CD14-positive monocyte (primary cell): ENCODE measurements at regions of chr12 and their contacts with region 1.

Region 1: DNA sequence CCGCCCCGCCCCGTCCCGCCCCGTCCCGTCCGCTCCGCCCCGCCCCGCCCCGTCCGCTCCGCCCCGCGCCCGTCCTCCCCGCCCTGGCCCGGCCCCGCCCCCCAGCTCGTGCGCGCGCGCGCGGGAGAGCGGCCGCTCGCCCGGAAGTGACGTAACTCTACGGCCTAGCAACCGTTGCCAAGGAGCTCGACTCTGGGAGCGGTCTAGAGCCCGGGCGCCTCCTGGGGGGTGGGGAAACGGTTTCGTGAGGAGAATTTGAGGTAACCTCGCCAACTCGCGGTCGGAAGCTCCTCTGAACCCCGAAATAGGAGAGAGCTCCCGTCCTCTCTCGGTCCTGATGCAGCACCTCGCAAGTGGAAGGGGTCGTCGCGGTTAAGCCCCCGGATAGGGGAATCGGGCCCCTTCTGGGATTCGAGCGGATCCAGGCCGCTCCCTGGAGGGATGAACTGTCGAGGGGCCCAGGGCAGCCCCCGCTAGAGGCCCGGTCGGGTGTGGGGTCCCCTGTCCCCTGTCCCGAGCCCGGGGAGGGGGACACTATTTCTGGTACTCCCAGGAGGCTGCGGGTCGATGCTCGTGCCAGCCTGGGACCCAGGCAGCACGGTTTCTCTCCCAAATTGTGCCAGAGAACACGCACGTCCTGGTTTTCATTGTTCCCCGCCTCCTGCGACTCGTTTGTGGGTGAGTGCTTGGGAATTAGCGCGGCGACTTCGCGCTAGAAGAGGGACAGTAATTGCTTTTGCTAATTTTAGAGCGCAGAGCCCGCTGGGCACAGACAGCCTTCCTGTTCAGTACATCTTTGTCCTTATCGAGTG is at the start of gene IFT81:
- DNase-seq: peak; percentile 89 to 94 (median 90)
- H3K4me3 ChIP-seq: peak within 1 kb of the TSS; percentile 68 to 88 (median 75)
- H3K4me3 Mint-ChIP-seq: peak within 1 kb of the TSS; percentile 94 to 96
- H3K27ac ChIP-seq: peak within 1 kb of the TSS; percentile 4 to 80
- H3K27ac Mint-ChIP-seq: peak within 1 kb of the TSS; percentile 86 to 98 (median 94)
- H3K4me1 ChIP-seq: peaks cover 18 to 33% of the 10 kb centered on the region in 2 donors
- H3K4me1 Mint-ChIP-seq: peaks cover 23% of the 10 kb centered on the region
- H3K27me3 ChIP-seq: no peaks in the 10 kb centered on the region
- H3K27me3 Mint-ChIP-seq: peaks cover 0 to 7% (median 0%) of the 10 kb centered on the region in 3 donors
- CTCF ChIP-seq: no peak
- polyA plus RNA-seq, gene IFT81: 0.39 to 0.97 (median 0.47) TPM

Region 2: GRCh38 chr12:109477185-109477962 is 647.0 kb before region 1 on chr12 and contains the starts of genes KCTD10 and UBE3B:
- intact Hi-C with region 1: loop called in 1 of 2 experiments (anchors 5 kb)
- DNase-seq: peak; percentile 88 to 90 (median 88)
- H3K4me3 ChIP-seq: peak within 1 kb of the TSS; percentile 74 to 95 (median 81)
- H3K4me3 Mint-ChIP-seq: peak within 1 kb of the TSS; percentile 93 to 96
- H3K27ac ChIP-seq: peak within 1 kb of the TSS; percentile 85 to 93
- H3K27ac Mint-ChIP-seq: peak within 1 kb of the TSS; percentile 92 to 100 (median 100)
- H3K4me1 ChIP-seq: peaks cover 20 to 28% of the 10 kb centered on the region in 2 donors
- H3K4me1 Mint-ChIP-seq: peaks cover 24% of the 10 kb centered on the region
- H3K27me3 ChIP-seq: no peaks in the 10 kb centered on the region
- H3K27me3 Mint-ChIP-seq: no peaks in the 10 kb centered on the region
- CTCF ChIP-seq: no peak
- polyA plus RNA-seq, gene KCTD10: 18.1 to 21.0 (median 20.0) TPM
- polyA plus RNA-seq, gene UBE3B: 14.4 to 25.9 (median 18.2) TPM

Region 3: GRCh38 chr12:110048242-110049027 is 76.0 kb before region 1 on chr12 and contains the start of gene C12orf76:
- intact Hi-C with region 1: loop called (anchors 10 kb)
- DNase-seq: peak; percentile 95 to 98 (median 95)
- H3K4me3 ChIP-seq: peak within 1 kb of the TSS; percentile 50 to 84 (median 57)
- H3K4me3 Mint-ChIP-seq: peak within 1 kb of the TSS; percentile 80 to 98
- H3K27ac ChIP-seq: peak within 1 kb of the TSS; percentile 82 to 88
- H3K27ac Mint-ChIP-seq: peak within 1 kb of the TSS; percentile 96 to 100 (median 99)
- H3K4me1 ChIP-seq: peaks cover 24 to 29% of the 10 kb centered on the region in 2 donors
- H3K4me1 Mint-ChIP-seq: peaks cover 30% of the 10 kb centered on the region
- H3K27me3 ChIP-seq: no peaks in the 10 kb centered on the region
- H3K27me3 Mint-ChIP-seq: no peaks in the 10 kb centered on the region
- CTCF ChIP-seq: no peak
- polyA plus RNA-seq, gene C12orf76: 9.3 to 19.4 (median 10.6) TPM

Region 4: GRCh38 chr12:110056147-110056484 is 68.3 kb before region 1 on chr12:
- intact Hi-C with region 1: loop called in 1 of 2 experiments (anchors 10 kb)
- DNase-seq: no peak
- H3K4me3 ChIP-seq: no peak overlapping the region
- H3K4me3 Mint-ChIP-seq: no peak overlapping the region
- H3K27ac ChIP-seq: peak overlapping the region in 1 of 2 donors; percentile 11
- H3K27ac Mint-ChIP-seq: peak overlapping the region in 2 of 7 donors; percentile 70 to 86
- H3K4me1 ChIP-seq: peaks cover 17 to 26% of the 10 kb centered on the region in 2 donors
- H3K4me1 Mint-ChIP-seq: peaks cover 33% of the 10 kb centered on the region
- H3K27me3 ChIP-seq: no peaks in the 10 kb centered on the region
- H3K27me3 Mint-ChIP-seq: peaks cover 0 to 2% (median 2%) of the 10 kb centered on the region in 3 donors
- CTCF ChIP-seq: no peak

Region 5: DNA sequence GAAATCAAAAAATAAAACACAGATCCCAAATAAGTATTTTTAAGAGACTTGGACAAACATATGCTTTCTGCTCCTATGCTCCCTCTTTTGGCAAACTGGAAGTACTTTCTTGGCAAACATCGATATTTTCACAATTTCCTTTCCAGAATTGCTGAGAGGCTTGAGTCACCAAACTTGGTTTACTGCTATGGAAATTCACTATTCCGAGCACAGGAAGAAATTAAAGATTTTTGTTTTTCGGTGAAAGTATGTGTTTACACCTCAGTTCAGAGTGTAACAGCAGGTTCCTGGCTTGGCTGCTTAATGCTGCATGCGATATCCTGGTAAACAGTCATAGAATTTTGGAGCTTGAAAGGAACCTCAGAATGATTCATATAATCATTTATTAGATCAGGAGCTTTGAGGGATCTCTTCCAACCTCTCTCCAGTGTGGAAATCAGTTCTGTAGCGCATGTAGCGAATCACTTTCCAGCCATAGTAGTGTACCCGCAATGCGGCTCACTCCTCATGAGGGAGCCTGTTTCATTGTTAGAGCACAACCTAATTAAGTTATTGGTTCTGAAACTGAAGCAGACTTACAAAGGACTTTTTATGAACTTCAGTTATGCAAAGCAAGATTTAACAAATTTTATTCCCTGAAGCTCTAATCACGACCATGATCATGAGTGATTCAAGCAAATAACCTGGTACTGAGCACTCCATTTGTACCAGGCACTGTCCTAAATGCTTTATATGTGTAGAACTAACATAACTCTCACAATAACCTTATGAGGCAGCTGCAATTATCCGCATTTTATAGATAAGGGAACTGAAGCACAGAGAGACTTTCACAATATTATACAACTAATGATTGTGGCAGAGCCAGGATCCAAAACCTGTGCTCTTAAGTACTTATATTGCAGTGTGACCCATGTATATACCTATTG is 100.3 kb after region 1 on chr12:
- intact Hi-C with region 1: loop called in 1 of 2 experiments (anchors 10 kb)
- DNase-seq: peak in 2 of 3 donors; percentile 37 to 46
- H3K4me3 ChIP-seq: peak overlapping the region in 2 of 3 experiments; percentile 9 to 37
- H3K4me3 Mint-ChIP-seq: peak overlapping the region in 1 of 2 donors; percentile 19
- H3K27ac ChIP-seq: peak overlapping the region in 1 of 2 donors; percentile 59
- H3K27ac Mint-ChIP-seq: peak overlapping the region in 6 of 7 donors; percentile 23 to 86 (median 52)
- H3K4me1 ChIP-seq: peaks cover 27 to 30% of the 10 kb centered on the region in 2 donors
- H3K4me1 Mint-ChIP-seq: peaks cover 27% of the 10 kb centered on the region
- H3K27me3 ChIP-seq: no peaks in the 10 kb centered on the region
- H3K27me3 Mint-ChIP-seq: peaks cover 0 to 4% (median 3%) of the 10 kb centered on the region in 3 donors
- CTCF ChIP-seq: peak; percentile 57

Region 6: DNA sequence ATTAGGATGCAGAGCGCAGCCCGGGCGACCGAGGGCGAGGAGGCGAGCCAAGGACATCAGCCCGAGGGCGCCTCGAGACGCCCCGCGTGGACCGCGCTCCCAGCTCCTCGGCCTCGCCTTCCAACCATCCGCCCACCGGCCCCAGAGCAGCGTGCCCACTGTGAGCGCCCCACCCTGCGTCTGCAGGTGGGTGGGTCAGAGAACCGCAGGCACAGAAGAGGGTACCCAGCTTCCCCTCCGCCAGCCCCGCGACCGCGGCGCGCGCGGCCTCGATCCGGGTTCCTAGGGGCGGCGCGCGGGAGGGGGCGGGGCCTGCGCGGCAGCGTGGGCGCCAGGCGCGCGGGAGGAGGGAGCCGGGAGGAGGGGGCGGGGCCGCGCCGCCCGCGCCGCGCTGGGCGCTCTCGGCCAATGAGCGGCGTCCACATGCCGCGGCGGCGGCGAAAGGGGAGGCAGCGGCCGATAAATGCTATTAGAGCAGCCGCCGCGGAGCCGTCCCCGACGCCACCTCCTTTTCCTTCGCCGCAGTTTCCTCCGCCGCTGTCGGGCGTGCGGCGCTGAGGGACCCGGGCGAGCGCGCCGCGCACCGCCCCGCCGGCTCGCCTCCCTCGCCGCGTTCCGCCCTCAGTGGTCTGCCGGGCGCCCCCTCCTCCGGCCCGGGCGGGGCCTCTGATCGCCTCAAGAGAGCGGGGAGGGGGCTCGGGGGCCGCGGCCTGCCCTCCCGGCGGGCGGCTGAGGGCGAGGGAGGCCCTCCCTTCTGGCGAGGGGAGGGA is 156.6 kb after region 1 on chr12 and contains the start of gene ATP2A2:
- intact Hi-C with region 1: loop called (anchors 5 to 10 kb)
- DNase-seq: peak; percentile 85 to 92 (median 89)
- H3K4me3 ChIP-seq: peak within 1 kb of the TSS; percentile 63 to 96 (median 89)
- H3K4me3 Mint-ChIP-seq: peak within 1 kb of the TSS; percentile 94 to 96
- H3K27ac ChIP-seq: peak within 1 kb of the TSS; percentile 90 to 94
- H3K27ac Mint-ChIP-seq: peak within 1 kb of the TSS; percentile 86 to 94 (median 92)
- H3K4me1 ChIP-seq: peaks cover 42 to 52% of the 10 kb centered on the region in 2 donors
- H3K4me1 Mint-ChIP-seq: peaks cover 47% of the 10 kb centered on the region
- H3K27me3 ChIP-seq: no peaks in the 10 kb centered on the region
- H3K27me3 Mint-ChIP-seq: peaks cover 0 to 7% (median 5%) of the 10 kb centered on the region in 3 donors
- CTCF ChIP-seq: no peak
- polyA plus RNA-seq, gene ATP2A2: 4.5 to 83.1 (median 6.9) TPM